Activated CD4-positive, alpha-beta memory T cell treated with anti-CD3 and anti-CD28 coated beads for 36 hours (primary cell): ENCODE measurements at regions of chr13 and their contacts with region 1.

Region 1: GRCh38 chr13:52450012-52450792 is at the start of gene VPS36:
- DNase-seq: peak; percentile 95
- H3K4me3 Mint-ChIP-seq: peak within 1 kb of the TSS; percentile 96
- H3K27ac Mint-ChIP-seq: peak within 1 kb of the TSS; percentile 88
- H3K4me1 Mint-ChIP-seq: peaks cover 39% of the 10 kb centered on the region
- H3K27me3 Mint-ChIP-seq: peaks cover under 1% of the 10 kb centered on the region
- total RNA-seq, gene VPS36: 24.7 to 26.6 TPM

Region 2: DNA sequence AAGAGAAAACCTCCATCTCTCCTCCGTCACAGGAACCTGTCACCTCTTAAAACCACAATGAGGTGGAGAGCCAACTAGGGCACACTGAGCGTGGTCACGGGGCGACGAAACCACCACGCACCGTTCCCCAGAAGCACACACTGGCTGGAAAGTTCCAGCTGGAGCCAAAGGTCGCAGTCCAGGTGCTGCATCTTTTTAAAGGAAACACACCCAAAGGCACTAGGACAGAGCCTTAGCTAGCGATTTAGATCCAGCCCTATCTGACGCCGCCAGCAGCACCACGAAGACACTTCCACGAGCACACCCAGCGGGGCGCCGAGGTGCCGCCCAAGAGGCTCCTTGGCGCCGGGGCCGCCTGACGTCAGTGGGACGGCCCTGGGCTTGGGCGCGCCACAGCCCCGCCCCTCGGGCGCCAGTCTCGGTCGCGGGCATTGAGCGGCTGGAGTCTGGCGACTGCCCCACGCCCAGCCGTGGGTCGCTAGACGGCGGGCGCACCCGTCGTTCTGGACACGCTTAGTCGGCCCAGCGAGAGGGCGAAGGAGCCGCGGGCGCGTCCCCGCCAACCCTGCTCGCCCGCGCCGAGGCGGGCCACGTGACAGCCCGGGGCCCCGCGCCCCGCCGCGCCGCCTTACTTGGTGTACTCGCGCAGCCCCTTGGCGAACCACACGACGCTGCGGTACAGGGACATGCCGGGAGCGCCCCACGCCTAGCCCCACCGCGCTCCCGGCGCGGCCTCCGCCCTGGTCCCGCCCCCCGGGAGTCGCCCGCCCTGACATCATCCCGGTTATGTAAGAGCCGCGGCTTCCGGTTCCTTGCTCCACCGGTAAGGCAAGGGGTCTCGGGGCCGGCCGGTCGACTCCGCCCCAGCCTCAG is 646.5 kb before region 1 on chr13 and contains the start of gene DHRS12:
- CTCF ChIA-PET with region 1: no interaction called
- POLR2A ChIA-PET with region 1: no interaction called
- intact Hi-C with region 1: loop called (anchors 5 kb)
- DNase-seq: peak; percentile 89
- H3K4me3 Mint-ChIP-seq: peak within 1 kb of the TSS; percentile 94
- H3K27ac Mint-ChIP-seq: peak within 1 kb of the TSS; percentile 100
- H3K4me1 Mint-ChIP-seq: peaks cover 58% of the 10 kb centered on the region
- H3K27me3 Mint-ChIP-seq: peaks cover 2% of the 10 kb centered on the region
- total RNA-seq, gene DHRS12: 6.7 to 7.0 TPM

Region 3: GRCh38 chr13:51906581-51906980 is 543.6 kb before region 1 on chr13:
- CTCF ChIA-PET with region 1: no interaction called
- POLR2A ChIA-PET with region 1: no interaction called
- intact Hi-C with region 1: no loop called
- DNase-seq: no peak
- H3K4me3 Mint-ChIP-seq: no peak overlapping the region
- H3K27ac Mint-ChIP-seq: no peak overlapping the region
- H3K4me1 Mint-ChIP-seq: peaks cover 30% of the 10 kb centered on the region
- H3K27me3 Mint-ChIP-seq: peaks cover 15% of the 10 kb centered on the region

Region 4: DNA sequence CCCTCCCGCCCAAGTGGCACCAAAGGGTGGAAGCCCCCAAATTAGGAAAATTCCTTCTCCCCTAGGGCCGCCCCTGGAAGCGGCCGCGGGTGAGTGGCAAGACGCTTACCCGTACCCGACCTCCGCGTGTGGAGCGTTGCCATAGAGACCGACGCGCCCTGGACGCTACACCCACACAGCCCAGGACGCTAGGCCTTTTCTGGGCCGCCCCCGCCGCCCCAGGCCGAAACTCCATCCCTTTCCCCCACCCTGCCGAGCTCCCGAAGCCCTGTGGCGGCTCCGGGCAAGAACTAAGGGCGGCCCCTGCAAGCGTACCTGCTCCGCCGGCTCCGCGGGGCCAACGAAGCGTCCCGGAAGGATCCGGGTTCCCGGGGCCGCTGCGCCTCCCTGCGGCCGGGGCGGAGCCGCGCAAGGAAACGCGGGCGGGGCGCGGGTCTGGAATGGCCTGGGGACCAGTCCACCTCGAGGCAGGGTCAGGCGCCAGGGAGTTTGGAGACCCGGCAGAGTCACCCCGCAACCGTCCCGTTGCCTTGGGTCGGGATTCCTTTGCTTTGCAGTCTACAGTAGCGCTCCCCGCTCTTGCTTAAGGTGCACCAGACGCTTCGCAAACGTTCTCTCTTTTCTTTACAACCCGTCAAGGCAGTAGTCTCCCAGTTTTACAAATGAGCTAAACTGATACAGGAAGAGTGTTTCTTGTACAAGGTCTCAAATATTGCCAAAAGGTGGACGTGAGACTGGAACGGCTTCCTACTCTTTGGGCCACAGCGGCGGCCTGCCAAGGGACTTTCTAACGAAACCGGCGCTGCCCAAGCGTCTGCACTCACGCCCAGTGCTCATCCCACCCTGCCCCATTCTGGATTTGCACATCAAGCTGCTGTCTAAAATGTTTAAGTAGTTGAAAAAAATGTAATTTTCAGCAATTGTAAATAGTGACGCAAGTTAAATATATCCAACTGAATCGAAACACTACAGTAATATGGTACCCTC is 321.2 kb before region 1 on chr13 and contains the start of gene NEK5:
- CTCF ChIA-PET with region 1: interaction called, 4 read pairs
- POLR2A ChIA-PET with region 1: no interaction called
- intact Hi-C with region 1: loop called (anchors 2 kb)
- DNase-seq: peak; percentile 70
- H3K4me3 Mint-ChIP-seq: peak within 1 kb of the TSS; percentile 76
- H3K27ac Mint-ChIP-seq: no peak within 1 kb of the TSS
- H3K4me1 Mint-ChIP-seq: peaks cover 13% of the 10 kb centered on the region
- H3K27me3 Mint-ChIP-seq: no peaks in the 10 kb centered on the region
- total RNA-seq, gene NEK5: 0.05 TPM in 1 of 2 experiments, not detected in the other

Region 5: DNA sequence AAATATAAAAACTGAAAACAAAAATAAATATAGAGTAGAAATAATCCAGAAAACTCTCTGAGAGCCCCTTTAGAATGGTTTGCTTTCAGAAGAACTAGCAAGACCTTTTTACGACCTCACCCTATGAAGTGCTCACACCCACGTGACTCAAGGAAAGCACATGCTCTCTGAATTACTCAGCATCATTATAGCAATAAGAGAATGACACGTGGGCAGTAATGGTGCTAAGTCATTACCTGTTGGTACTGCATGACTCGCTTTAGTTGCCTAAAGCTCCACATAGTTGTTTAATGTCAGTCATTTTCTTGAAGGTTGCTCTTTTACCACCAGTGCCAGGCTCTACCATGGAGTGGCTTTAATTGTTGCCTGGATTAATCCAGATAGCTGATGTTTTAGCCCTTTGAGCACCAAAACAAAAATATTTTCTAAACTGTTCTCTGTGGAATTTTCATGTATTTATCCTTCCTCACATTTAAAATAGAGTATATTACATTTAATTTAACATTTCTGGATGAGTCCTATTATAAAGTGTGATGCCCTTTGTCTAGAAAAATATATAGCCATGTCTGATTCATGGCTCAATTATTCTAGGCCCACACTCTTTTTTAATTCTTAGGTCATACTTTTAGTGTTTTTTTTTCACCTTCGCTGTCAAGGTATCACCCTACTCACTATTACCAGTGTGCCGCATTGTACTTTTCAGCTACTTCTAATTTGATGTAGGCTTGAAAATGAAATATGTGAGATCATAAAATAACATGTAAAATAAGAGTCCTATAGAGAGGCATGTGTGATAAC is 101.0 kb before region 1 on chr13:
- CTCF ChIA-PET with region 1: interaction called, 25 read pairs
- POLR2A ChIA-PET with region 1: interaction called, 3 read pairs
- intact Hi-C with region 1: loop called (anchors 1 kb)
- DNase-seq: peak; percentile 39
- H3K4me3 Mint-ChIP-seq: no peak overlapping the region
- H3K27ac Mint-ChIP-seq: no peak overlapping the region
- H3K4me1 Mint-ChIP-seq: peaks cover 2% of the 10 kb centered on the region
- H3K27me3 Mint-ChIP-seq: peaks cover 16% of the 10 kb centered on the region

Region 6: GRCh38 chr13:52617070-52618060 is 167.2 kb after region 1 on chr13:
- CTCF ChIA-PET with region 1: no interaction called
- POLR2A ChIA-PET with region 1: interaction called, 3 read pairs
- intact Hi-C with region 1: loop called (anchors 1 kb)
- DNase-seq: peak; percentile 92
- H3K4me3 Mint-ChIP-seq: peak overlapping the region; percentile 99
- H3K27ac Mint-ChIP-seq: peak overlapping the region; percentile 87
- H3K4me1 Mint-ChIP-seq: peaks cover 38% of the 10 kb centered on the region
- H3K27me3 Mint-ChIP-seq: no peaks in the 10 kb centered on the region